Transverse colon (tissue), 4 donors: ENCODE measurements at regions of chr15 and their contacts with region 1.

Region 1: GRCh38 chr15:78018946-78019644 is 58.4 kb downstream of the TBC1D2B start:
- DNase-seq: no peak
- H3K4me3 ChIP-seq: no peak overlapping the region
- H3K27ac ChIP-seq: peak overlapping the region; percentile 27 to 71 (median 60)
- H3K4me1 ChIP-seq: peaks cover 0 to 30% (median 15%) of the 10 kb centered on the region in 4 donors
- H3K27me3 ChIP-seq: no peaks in the 10 kb centered on the region
- CTCF ChIP-seq: no peak
- EP300 ChIP-seq: no peak
- POLR2A ChIP-seq: no peak

Region 2: GRCh38 chr15:77282333-77282732 is 736.8 kb before region 1 on chr15:
- in situ Hi-C with region 1: no loop called
- intact Hi-C with region 1: loop called (anchors 10 kb)
- DNase-seq: no peak
- H3K4me3 ChIP-seq: no peak overlapping the region
- H3K27ac ChIP-seq: peak overlapping the region in 1 of 4 donors; percentile 41
- H3K4me1 ChIP-seq: peaks cover 0 to 3% (median 0%) of the 10 kb centered on the region in 4 donors
- H3K27me3 ChIP-seq: no peaks in the 10 kb centered on the region
- CTCF ChIP-seq: no peak
- EP300 ChIP-seq: no peak
- POLR2A ChIP-seq: no peak

Region 3: DNA sequence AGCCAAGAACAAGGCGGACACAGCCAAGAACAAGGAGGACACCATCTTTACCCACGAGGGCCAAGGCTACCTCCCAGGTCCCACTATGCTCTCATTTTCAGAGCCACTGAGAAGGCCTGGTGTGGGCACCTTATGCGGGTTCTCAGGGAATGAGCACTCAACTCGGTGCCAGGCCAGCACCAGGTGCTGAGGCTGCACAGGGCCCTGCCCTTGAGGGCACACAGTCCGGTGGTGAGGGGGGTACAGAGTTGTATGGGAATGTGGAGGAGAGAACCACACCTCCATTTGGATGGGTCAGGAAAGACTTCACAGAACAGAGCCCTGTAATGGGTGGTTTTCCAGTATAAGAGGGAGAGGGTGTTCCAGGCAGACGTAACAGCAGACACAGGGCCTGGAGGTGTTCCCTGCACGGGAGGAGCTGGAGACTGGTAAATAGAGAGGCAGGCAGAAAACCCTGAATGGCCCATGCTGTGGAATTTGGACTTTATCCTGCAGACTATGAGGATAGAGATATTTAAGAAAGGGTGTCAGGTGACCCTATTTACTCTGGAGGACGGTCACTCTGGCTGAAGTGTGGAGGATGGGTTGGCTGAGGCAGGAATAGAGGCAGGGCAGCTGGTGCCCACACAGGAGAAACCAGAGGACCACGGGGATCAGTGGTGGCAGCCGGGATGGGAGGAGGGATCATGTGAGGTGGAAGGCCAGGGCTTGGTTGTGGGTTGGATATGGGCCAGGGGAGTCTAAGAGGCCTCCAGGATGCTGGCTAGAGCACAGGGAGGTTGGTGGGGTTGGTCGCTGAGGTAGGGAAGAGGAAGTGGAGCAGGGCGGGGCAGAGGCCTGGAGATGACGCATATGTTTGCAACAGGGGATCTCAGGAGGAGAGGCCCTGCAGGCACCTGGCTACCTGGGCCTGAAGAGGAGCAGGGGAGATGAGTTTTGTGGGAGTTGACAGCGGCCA is 355.6 kb after region 1 on chr15:
- in situ Hi-C with region 1: no loop called
- intact Hi-C with region 1: no loop called
- DNase-seq: peak; percentile 88
- H3K4me3 ChIP-seq: no peak overlapping the region
- H3K27ac ChIP-seq: peak overlapping the region; percentile 85 to 91 (median 88)
- H3K4me1 ChIP-seq: peaks cover 5 to 37% (median 13%) of the 10 kb centered on the region in 4 donors
- H3K27me3 ChIP-seq: no peaks in the 10 kb centered on the region
- CTCF ChIP-seq: no peak
- EP300 ChIP-seq: peak; percentile 46
- POLR2A ChIP-seq: peak; percentile 68